ENCODE measurements at regions of chr1 and their contacts with region 1.

Region 1: DNA sequence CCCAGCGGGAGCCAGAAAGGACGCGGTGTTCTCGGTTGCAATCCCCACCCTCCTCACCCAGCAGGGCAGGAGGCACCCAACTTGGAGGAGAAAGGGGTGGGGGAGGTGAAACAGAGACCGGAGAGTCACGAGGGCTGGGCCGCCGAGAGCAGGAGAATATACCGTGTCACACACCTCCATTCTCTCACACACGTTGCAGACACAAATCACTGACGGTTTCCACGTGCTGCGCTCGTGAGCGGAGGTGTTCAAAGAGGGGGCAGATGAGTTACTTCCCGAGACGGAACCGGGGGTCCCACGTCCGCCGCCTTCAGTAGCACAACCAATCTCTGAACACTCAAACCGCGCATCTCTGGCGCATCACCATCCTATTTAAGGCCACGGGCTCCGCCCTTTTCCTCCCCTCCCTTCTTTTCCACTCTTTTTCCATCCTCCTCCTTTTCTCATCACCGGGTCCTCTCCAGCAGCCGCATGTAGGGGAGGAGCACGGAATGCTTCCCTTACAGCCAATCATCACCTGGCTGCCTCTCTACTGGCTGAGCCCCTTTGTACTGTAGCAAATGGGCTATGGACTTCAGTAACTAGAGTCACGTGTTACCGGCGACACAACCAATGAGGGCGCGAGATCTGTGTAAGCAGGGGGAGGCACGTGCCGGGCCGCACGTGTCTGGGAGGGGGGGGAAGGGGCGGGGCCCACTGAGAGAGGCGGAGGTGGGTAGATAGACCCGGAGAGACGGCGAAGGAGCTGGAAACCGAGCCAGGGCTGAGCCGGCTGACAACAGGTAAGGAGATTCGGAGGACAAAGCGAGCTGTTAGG is at the start of gene CIART:
- DNase-seq: peak; percentile 54 to 89 (median 73)
- ATAC-seq: peak; percentile 89 to 94 (median 90)
- H3K4me3 ChIP-seq: peak within 1 kb of the TSS; percentile 33 to 48
- H3K4me3 Mint-ChIP-seq: peak within 1 kb of the TSS; percentile 81 to 90 (median 84)
- H3K27ac ChIP-seq: peak within 1 kb of the TSS; percentile 75
- H3K27ac Mint-ChIP-seq: peak within 1 kb of the TSS; percentile 78 to 86
- H3K4me1 ChIP-seq: peaks cover 8 to 19% of the 10 kb centered on the region in 2 experiments
- H3K4me1 Mint-ChIP-seq: peaks cover 26 to 42% (median 28%) of the 10 kb centered on the region in 3 donors
- H3K27me3 ChIP-seq: peaks cover 0 to 4% of the 10 kb centered on the region in 2 experiments
- H3K27me3 Mint-ChIP-seq: no peaks in the 10 kb centered on the region
- total RNA-seq, gene CIART: 0.63 to 2.9 (median 1.3) TPM

Region 2: DNA sequence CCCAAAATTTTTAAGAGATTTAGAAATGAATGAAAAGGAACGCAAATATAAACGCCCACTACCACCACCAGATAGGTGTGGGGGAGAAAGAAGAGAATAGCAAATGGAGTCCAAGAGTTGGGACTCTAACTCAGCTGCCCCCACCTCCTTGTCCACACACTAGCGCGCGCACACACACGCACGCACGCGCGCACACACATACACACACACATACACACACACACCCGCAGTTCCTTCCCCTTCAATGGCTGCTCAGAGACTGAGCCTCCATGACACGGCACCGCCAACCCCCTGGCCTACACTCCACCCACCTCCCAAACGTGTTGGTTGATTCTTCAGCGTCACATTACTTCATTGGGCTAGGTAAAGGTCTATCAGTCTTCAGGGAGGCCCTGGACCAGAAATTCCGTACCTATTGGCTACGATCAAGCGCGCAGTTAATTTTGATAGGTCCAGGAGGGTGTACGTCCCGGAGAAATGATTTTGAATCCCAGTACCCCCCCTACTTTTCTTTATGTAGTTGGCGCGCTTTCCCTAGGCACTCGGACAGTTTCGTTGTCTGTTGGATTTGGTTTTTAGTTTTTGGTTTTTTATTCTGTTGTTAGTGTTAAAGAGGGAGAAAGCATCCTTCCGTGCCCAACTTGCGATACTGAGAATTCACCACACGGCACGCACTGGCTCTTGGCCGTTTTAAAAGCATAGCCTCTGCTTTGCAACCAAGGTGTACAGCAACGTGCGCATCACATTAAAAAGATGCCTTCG is 46.0 kb before region 1 on chr1 and contains the start of gene ANP32E:
- CTCF ChIA-PET with region 1: no interaction called
- POLR2A ChIA-PET with region 1: no interaction called
- DNase-seq: peak; percentile 80 to 98 (median 94)
- ATAC-seq: peak; percentile 88 to 93 (median 92)
- H3K4me3 ChIP-seq: peak within 1 kb of the TSS; percentile 66 to 98
- H3K4me3 Mint-ChIP-seq: no peak within 1 kb of the TSS
- H3K27ac ChIP-seq: peak within 1 kb of the TSS; percentile 99
- H3K27ac Mint-ChIP-seq: peak within 1 kb of the TSS; percentile 96 to 98
- H3K4me1 ChIP-seq: peaks cover 2 to 13% of the 10 kb centered on the region in 2 experiments
- H3K4me1 Mint-ChIP-seq: peaks cover 16 to 20% (median 19%) of the 10 kb centered on the region in 3 donors
- H3K27me3 ChIP-seq: no peaks in the 10 kb centered on the region
- H3K27me3 Mint-ChIP-seq: no peaks in the 10 kb centered on the region
- total RNA-seq, gene ANP32E: 40.2 to 46.3 (median 44.9) TPM

Region 3: DNA sequence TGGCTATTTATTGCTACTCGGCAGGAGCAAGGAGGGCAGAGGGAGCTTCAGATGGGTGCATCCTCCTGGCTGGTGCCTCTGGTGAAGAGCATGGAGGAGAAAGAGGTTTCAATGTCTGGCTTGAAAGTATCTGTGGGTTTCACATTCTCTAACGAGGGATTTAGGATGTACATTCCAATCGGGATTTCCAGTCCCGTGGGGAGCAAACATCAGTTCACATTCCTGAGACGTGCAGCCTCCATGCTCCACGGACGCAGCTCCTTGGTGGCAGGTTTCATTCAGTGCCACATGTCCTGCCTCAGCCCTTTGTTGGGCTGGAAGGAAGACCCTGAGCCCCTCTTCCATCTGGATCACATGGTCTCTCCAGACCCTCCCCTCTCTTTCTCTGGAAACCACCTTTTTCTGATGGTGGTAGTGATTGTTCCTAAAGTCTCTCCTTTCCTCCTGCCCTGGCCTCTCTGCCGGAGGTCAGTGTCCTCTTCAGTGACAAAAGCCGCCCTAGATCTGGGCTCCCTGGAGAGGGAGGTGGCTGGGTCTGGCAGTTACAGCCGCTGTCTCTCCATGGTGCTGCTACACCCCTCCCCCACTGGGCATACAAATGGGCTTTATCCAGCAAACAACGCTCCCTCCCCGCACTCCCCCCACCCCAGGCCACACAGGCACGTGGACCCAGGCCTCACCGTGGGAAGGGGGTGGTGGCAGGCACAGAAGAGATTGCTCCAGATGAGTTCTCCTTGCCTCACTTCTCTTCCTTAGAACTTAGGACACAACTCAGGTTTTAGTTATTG is 25.3 kb before region 1 on chr1:
- CTCF ChIA-PET with region 1: interaction called, 3 to 12 read pairs
- POLR2A ChIA-PET with region 1: no interaction called
- DNase-seq: no peak
- ATAC-seq: no peak
- H3K4me3 ChIP-seq: no peak overlapping the region
- H3K4me3 Mint-ChIP-seq: peak overlapping the region in 1 of 3 donors; percentile 58
- H3K27ac ChIP-seq: no peak overlapping the region
- H3K27ac Mint-ChIP-seq: no peak overlapping the region
- H3K4me1 ChIP-seq: peaks cover 2 to 17% of the 10 kb centered on the region in 2 experiments
- H3K4me1 Mint-ChIP-seq: peaks cover 14 to 16% (median 15%) of the 10 kb centered on the region in 3 donors
- H3K27me3 ChIP-seq: peaks cover 9 to 49% of the 10 kb centered on the region in 2 experiments
- H3K27me3 Mint-ChIP-seq: peaks cover 31 to 43% of the 10 kb centered on the region in 2 donors

Measured in T-cell (primary cell).